ENCODE measurements at regions of chr2 and their contacts with region 1.

Region 1: DNA sequence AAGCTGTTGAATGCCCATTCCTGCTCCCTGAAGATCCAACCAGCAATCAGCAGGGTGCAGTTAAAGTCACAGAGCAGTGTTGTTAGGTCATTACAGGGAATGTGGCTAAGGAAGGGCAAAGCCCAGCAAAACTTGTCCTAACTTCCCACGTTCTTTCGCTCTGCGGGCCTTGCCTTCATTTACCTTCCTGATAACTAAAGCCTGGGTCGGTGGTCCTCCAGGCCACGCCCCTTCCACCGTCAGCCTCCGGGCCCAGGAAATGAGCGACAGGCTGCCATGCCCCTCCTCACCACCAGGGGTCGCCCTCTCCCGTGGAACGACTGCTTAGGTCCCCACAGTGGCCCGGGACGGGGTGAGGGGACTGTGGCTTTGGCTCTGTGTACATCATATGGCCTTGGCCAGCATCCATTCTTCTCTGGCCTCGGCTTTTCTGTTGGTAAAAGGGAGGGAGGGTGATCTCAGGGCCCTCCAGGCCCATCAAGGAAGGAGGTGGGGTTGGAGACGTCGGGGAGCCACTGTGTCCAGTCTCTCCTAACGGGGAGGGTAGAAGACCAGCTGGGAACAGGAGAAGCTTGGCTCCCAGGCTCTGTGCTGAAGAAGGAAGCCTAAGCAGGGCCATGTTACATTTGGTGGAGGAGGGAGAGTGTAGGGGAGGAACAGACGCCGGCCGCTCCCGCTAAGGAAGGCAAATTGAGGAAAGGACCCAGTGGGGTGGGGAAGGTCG is 2.2 kb downstream of the SH2D6 start:
- DNase-seq: peak; percentile 88

Region 2: DNA sequence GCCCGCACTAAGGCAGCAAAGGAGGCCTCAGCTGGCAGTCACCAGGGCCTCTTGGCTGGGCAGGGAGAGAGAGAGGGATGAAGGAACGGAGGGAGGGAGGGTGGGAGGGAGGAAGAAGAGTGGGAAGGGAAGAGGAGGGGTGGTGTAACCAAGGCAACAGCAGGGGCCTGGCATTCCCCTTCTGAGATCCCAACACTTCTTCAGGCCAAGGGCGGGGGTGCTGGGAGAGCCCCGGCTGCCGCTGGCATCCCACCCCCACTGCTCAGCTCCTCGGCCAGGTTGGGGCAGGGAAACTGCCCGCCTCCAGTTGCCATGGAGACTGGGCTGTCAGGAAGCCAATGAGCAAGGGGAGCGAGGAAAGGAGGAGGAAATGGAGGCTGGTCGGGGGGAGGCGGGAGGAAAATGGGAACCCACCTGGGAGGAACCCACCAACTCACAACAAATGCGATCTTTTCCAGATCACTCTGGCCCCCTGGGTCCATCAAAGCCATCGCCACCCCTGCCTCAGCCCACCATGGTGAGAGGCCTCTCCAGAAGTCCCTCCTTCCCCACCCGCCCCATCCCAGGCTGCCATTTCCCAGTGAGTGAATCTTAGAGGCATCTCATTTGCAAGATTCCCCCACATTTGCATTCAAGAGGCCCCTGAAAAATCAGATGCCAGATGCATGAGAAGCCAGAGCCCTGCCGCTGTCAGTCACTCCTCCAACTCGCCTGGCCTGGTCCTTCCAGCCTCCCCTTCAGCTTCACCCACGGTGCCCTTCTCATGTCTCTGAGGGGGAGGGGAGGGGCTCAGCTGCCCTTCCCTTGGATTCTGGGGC is 10.3 kb after region 1 on chr2:
- CTCF ChIA-PET with region 1: interaction called, 5 read pairs
- POLR2A ChIA-PET with region 1: interaction called, 11 read pairs
- DNase-seq: no peak

Region 3: DNA sequence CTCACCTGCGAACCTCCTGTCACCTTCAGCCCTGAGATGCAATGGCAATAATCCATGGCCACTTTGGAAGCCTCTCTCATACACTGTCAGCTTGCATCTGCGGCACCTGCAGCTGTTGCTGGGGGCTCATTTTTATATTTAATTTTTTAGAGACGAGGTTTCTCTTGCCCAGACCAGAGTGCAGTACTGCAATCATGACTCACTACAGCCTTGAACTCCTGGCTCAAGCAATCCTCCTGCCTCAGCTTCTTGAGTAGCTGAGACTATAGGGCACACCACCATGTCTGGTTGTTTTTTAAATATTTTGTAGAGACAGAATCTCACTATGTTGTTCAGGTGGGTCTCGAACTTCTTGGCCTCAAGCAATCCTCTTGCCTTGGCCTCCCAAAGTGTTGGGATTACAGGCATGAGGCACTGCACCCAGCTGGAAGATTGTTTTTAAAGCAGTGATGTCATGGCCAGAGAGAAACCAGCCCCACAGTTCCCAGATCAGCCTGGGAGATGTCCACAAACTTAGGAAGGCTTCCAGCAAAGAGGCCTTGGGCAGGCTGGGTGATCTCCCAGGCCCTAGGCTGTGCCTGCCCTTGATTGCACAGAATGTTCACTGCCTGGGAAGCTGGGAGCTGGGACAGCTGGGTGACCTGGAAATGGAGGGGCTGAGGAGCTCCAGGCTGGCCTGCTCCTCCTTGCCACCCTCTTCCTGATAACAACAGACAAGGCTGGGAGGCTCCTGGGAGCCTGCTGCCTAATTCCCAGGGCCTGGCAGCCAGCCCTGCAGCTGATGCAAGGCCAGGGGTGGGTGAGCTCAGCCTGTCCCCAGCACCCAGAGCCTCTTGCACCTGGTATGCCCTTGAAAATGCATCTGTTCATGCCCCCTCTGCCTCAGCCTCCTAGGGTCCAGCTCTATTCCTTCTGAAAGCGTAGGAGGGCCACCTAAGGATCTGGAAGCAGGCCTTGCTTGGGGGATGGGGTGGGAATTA is 24.9 kb after region 1 on chr2:
- CTCF ChIA-PET with region 1: interaction called, 3 read pairs
- POLR2A ChIA-PET with region 1: interaction called, 19 read pairs
- DNase-seq: no peak

Region 4: GRCh38 chr2:85538486-85539360 is 118.0 kb after region 1 on chr2 and contains the start of gene MAT2A:
- CTCF ChIA-PET with region 1: interaction called, 5 read pairs
- POLR2A ChIA-PET with region 1: interaction called, 105 read pairs
- DNase-seq: peak; percentile 91

Region 5: GRCh38 chr2:85561317-85561979 is 140.8 kb after region 1 on chr2 and contains the start of gene GGCX:
- CTCF ChIA-PET with region 1: interaction called, 6 read pairs
- POLR2A ChIA-PET with region 1: interaction called, 30 read pairs
- DNase-seq: peak; percentile 93